ENCODE measurements at regions of chr6 and their contacts with region 1.

Region 1: DNA sequence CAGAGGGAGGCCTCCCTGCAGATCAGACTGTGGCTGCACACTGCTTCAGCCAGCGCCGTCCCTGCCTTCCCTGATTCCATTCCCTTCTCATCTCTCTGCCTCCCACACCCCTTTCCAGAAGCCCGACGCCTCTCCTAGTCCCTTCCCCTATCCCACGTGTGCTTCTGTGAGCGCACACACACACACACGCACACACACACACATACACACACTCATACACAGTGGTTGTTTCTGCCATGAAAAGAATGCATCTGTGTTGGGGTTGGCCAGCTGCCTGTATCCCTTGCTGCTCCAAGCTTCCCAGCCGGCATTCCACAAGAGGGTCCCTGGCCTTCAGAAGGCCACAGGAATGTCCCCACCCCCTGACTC is 51.7 kb downstream of the MOCS1 start:
- DNase-seq: peak in 1 of 2 donors; percentile 48
- ATAC-seq: peak; percentile 5 to 31 (median 14)
- H3K4me3 ChIP-seq: no peak overlapping the region
- H3K27ac ChIP-seq: peak overlapping the region; percentile 30
- H3K4me1 ChIP-seq: peaks cover 43% of the 10 kb centered on the region
- H3K27me3 ChIP-seq: no peaks in the 10 kb centered on the region
- CTCF ChIP-seq: no peak

Region 2: DNA sequence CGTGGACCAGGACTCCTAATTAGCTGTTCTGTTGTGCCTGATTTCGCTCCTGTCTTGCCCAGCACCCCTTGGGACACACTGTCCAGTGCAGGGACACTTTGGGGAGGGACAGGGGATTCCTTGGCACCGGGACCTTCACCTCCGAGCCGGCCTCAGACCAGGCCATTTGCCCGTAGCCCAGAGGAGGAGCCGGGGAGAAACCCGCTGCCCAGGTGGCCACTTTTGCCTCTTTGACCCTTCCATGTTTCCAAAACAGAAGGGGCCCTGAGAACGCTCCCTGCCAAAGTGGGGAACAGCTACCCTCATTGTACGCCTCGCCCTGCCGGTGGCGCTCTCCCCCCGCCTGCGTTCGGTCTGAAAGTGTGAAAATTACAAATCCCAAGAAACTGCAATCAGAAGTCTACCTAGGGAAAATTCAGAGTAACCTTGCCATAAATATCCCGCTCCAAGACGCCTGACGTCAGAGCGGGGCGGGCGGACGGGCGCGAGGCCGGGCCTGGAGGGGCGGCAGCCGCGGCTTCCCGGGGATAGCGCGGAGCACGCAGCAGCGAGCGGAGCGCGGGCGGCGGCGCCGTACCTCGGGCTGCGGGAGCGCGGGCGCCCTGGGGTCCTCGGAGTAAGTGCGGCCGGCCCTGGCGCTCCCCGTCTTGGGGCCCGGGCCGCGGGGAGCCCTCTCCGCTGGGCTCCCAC is 90.5 kb before region 1 on chr6 and contains the start of gene DAAM2:
- intact Hi-C with region 1: loop called in 1 of 2 experiments (anchors 5 kb)
- DNase-seq: peak; percentile 74 to 78
- ATAC-seq: peak; percentile 85 to 92 (median 88)
- H3K4me3 ChIP-seq: peak within 1 kb of the TSS; percentile 89
- H3K27ac ChIP-seq: peak within 1 kb of the TSS; percentile 82
- H3K4me1 ChIP-seq: peaks cover 20% of the 10 kb centered on the region
- H3K27me3 ChIP-seq: no peaks in the 10 kb centered on the region
- CTCF ChIP-seq: peak; percentile 8
- total RNA-seq, gene DAAM2: 10.7 to 67.1 (median 23.4) TPM

Region 3: GRCh38 chr6:39952167-39952566 is 69.7 kb after region 1 on chr6:
- intact Hi-C with region 1: no loop called
- DNase-seq: no peak
- ATAC-seq: peak; percentile 37 to 60 (median 58)
- H3K4me3 ChIP-seq: no peak overlapping the region
- H3K27ac ChIP-seq: peak overlapping the region; percentile 39
- H3K4me1 ChIP-seq: peaks cover 10% of the 10 kb centered on the region
- H3K27me3 ChIP-seq: no peaks in the 10 kb centered on the region
- CTCF ChIP-seq: no peak

Measured in psoas muscle (tissue), 8 donors.